GM10248 (cell line): ENCODE measurements at regions of chr17 and their contacts with region 1.

Region 1: DNA sequence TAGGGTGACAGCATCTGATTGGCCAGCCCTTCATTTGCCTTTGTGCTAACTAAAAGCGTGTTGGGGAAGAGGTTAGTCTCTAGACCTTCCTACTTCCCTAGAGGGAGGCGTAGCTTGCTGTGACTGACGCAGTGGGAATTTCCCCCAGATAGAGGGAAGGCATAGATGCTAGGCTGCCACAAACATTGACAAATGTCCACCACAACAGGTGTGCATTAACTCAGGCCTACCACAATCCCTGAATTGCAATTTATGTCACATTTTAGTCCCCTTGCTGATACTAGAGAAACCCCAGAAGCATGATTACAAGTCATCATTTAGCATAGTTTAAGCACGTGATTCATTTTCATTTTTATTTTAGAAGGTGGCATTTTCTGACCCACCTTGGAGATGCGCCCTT is 76.3 kb upstream of the WSB1 start:
- DNase-seq: peak; percentile 42
- CTCF ChIP-seq: no peak

Region 2: DNA sequence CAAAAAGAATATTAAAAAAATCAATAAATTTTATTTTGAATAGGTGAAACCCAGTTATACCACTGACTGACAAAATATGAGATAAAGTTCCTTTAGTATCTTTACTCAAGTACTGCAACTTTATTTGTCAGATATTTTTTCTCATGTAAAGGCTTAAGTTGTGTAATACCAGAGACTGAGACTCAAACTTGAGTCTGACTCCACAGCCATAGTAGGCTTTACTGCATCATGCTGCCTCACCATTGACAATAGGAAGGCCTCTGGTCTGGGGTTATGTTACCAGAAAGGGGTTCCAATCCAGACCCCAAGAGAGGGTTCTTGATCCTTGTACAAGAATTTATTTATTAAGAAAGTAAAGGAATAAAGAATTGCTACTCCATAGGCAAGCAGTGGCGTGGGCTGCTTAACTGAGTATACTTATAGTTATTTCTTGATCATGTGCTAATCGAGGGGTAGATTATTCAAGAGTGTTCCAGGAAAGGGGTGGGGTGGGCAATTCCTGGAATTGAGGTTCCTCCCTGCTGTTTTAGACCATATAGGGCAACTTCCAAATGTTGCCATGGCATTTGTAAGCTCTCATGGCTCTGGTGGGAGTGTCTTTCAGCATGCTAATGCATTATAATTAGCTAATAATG is 111.2 kb before region 1 on chr17:
- CTCF ChIA-PET with region 1: no interaction called
- POLR2A ChIA-PET with region 1: no interaction called
- DNase-seq: no peak
- CTCF ChIP-seq: no peak

Region 3: GRCh38 chr17:27206447-27206846 is 11.2 kb before region 1 on chr17:
- CTCF ChIA-PET with region 1: interaction called, 16 read pairs
- POLR2A ChIA-PET with region 1: no interaction called
- DNase-seq: no peak
- CTCF ChIP-seq: peak; percentile 35

Region 4: DNA sequence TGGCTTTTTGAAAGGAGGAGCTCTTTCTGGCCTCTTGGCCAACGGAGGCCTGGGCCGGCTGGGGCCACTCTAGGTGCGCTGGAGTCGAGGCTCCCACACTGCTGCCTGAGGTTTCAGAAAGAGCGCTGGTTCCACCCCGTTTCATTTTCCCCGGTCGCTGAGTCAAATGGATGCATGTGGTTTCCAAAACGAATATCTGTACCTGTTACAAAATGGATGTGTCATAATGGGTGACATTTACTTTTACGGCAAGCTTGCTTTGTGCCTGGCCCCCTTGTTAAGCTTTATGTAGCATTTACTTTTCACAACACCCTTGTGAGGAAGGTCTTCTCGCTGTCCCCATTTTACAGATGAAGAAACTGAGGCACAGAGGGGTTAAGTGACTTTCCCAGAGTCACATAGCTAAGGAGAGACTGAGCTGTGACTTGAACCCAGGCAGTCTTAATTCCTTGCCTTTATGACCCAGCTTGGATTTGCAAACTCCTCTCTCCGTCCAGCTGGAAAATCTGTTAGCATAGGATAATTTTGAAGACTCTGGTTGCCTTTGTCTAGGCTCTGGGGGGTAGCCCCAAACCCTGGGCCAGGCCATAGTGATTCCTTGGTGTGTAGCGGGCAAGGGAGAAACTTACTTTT is 249.2 kb after region 1 on chr17:
- CTCF ChIA-PET with region 1: no interaction called
- POLR2A ChIA-PET with region 1: no interaction called
- DNase-seq: peak; percentile 80
- CTCF ChIP-seq: no peak